ENCODE measurements at regions of chr10 and their contacts with region 1.

Region 1: DNA sequence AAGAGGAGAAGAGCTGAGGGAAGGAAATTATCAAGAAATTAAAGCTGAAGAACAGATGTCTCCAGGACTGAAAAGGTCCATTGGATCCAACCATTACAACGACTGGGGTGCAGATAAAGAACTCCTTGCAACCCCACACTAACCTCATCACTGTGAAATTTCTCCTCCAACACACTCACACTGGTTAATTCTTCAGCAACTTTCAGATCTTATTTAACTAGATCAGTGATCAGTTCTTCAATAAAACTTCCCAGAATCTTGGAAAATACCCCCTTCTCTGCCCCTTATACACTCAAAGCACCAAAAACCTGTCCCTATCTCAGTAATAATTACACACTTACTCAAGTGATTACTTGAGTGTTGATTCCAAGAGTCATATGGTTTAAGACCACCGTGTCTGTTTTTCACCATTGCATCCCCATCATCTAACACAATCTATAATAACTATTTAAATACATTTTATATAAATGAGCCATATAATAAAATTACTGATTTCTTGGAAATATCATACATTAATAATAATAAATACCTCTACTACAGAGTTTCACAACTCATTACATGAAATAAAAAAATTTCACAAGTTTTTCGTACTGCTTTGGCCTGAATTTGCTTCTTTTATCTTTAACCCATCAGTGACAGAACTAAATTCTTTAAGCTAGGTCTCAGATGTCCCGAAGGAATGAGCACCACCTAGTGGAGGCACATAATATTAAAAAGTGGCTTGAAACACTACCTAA is 123.7 kb downstream of the MPP7 start:
- DNase-seq: peak; percentile 14
- H3K4me3 Mint-ChIP-seq: peak overlapping the region; percentile 43
- H3K27ac Mint-ChIP-seq: peak overlapping the region; percentile 88
- H3K4me1 Mint-ChIP-seq: peaks cover 20% of the 10 kb centered on the region
- H3K27me3 Mint-ChIP-seq: peaks cover 12% of the 10 kb centered on the region

Region 2: GRCh38 chr10:27446091-27446918 is 732.9 kb before region 1 on chr10:
- intact Hi-C with region 1: loop called (anchors 1 kb)
- DNase-seq: no peak
- H3K4me3 Mint-ChIP-seq: no peak overlapping the region
- H3K27ac Mint-ChIP-seq: no peak overlapping the region
- H3K4me1 Mint-ChIP-seq: no peaks in the 10 kb centered on the region
- H3K27me3 Mint-ChIP-seq: peaks cover 2% of the 10 kb centered on the region

Region 3: GRCh38 chr10:27742195-27743011 is 436.8 kb before region 1 on chr10:
- intact Hi-C with region 1: loop called (anchors 1 kb)
- DNase-seq: peak; percentile 73
- H3K4me3 Mint-ChIP-seq: peak overlapping the region; percentile 65
- H3K27ac Mint-ChIP-seq: no peak overlapping the region
- H3K4me1 Mint-ChIP-seq: peaks cover 34% of the 10 kb centered on the region
- H3K27me3 Mint-ChIP-seq: peaks cover 63% of the 10 kb centered on the region

Region 4: GRCh38 chr10:28334296-28334695 is 155.1 kb after region 1 on chr10:
- intact Hi-C with region 1: loop called (anchors 1 kb)
- DNase-seq: peak; percentile 66
- H3K4me3 Mint-ChIP-seq: peak overlapping the region; percentile 81
- H3K27ac Mint-ChIP-seq: peak overlapping the region; percentile 99
- H3K4me1 Mint-ChIP-seq: peaks cover 67% of the 10 kb centered on the region
- H3K27me3 Mint-ChIP-seq: peaks cover 21% of the 10 kb centered on the region

Region 5: GRCh38 chr10:28676968-28677887 is 498.1 kb after region 1 on chr10 and contains the start of gene BAMBI:
- intact Hi-C with region 1: loop called (anchors 5 kb)
- DNase-seq: peak; percentile 90
- H3K4me3 Mint-ChIP-seq: peak within 1 kb of the TSS; percentile 82
- H3K27ac Mint-ChIP-seq: no peak within 1 kb of the TSS
- H3K4me1 Mint-ChIP-seq: peaks cover 27% of the 10 kb centered on the region
- H3K27me3 Mint-ChIP-seq: peaks cover 78% of the 10 kb centered on the region
- total RNA-seq, gene BAMBI: 0.23 and 0.81 TPM in 2 replicates